Posterior vena cava (tissue), 2 donors: ENCODE measurements at regions of chr20 and their contacts with region 1.

Region 1: GRCh38 chr20:47328130-47328529 is 28.4 kb downstream of the ZMYND8 start:
- DNase-seq: no peak

Region 2: DNA sequence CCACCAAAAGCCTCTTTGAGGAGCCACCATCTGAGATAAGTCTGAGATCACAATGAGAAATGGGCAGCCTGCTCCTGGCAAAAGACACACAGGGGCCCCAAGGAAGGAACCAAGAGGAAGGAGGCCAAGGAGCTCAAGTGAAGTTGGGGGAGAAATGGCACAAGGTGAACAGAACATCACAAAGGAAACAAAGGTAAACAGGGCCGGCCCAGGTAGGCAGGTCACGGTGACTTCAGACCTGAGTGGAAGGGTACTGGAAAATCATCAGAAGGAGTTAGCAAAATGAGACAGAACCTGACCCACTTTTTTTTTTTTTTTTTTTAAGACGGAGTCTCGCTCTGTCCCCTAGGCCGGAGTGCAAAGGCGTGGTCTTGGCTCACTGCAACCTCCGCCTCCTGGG is 17.1 kb after region 1 on chr20:
- intact Hi-C with region 1: loop called in 1 of 2 experiments (anchors 2 kb)
- DNase-seq: no peak

Region 3: GRCh38 chr20:48224520-48224919 is 896.4 kb after region 1 on chr20:
- intact Hi-C with region 1: no loop called
- DNase-seq: no peak

Region 4: DNA sequence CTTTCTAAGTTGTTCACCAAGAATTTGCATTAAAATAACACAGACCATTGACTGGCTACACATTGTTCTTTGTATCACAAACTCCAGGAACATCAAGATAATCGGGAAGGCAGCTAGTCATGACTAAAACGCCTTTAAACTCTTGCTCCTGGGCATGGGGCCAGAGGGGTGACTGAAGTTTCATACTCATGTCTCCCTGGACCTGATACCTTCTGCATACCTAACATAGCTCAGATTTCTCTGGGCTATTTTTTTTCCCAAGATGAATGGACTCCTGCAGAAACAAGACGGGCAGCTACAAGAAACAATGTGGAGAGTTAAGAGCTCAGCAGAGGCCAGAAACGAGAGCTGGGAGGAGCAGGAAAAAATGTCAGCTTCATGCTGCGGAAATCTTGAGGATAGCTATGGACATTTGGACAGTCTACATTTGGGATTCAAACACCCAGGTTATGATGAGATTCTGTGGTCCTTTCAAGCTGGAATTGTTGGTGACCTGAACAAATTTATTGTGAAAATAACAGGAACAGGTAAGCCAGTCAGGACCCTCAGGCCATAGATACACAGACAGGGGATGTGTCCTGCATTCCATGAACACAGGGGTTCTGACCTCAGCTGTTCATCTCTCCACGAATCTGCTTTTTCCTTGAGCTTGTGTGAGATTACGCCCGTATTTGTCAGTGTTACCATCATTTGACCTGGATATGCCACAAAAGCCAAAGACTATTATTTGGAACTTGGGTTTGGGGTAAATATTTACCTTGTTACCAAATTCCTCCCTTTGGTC is 1210.5 kb after region 1 on chr20:
- intact Hi-C with region 1: no loop called
- DNase-seq: no peak